Ovary (tissue), 10 donors: ENCODE measurements at regions of chr10 and their contacts with region 1.

Region 1: DNA sequence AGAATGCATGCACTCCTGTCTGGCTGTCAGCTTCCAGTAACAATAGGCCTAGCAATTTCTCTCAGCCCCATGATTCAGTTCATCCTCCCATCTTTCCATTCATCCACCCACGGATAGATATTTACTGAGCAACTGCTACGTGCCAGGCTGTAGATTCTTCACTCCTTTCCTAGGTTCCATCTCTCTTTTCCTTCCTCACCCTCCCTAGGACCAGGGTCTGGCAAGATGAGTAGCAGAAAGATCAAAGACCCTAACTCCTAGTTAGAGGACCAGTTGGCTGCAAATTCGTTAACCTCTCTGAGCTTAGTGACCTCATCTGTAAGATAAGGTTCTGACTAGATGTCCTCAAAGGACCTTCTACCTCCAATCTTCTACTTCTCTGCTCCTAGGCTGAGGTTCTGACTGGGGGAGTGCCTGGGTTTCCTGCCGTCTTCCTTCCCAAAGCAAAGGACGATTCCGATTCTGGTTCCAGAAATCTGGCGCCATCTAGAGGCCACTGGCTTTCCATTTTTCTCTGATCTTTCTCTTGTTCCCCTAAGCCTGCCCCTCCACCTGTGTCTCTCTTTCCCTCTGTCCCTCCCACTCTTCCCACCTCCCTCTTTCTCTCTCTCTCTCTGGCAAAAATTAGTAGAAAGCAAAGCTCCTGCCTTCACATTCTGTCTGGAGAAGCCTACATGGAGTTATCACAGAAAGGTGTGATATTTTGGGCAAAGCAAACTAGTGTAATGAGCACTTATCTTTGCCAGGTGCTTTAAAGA is 26.2 kb downstream of the TBATA start:
- DNase-seq: peak; percentile 65 to 78 (median 74)
- H3K4me3 ChIP-seq: no peak overlapping the region
- H3K27ac ChIP-seq: no peak overlapping the region
- H3K4me1 ChIP-seq: no peaks in the 10 kb centered on the region
- H3K27me3 ChIP-seq: no peaks in the 10 kb centered on the region
- CTCF ChIP-seq: peak in 2 of 3 donors; percentile 23 to 60
- EP300 ChIP-seq: no peak
- POLR2A ChIP-seq: no peak

Region 2: DNA sequence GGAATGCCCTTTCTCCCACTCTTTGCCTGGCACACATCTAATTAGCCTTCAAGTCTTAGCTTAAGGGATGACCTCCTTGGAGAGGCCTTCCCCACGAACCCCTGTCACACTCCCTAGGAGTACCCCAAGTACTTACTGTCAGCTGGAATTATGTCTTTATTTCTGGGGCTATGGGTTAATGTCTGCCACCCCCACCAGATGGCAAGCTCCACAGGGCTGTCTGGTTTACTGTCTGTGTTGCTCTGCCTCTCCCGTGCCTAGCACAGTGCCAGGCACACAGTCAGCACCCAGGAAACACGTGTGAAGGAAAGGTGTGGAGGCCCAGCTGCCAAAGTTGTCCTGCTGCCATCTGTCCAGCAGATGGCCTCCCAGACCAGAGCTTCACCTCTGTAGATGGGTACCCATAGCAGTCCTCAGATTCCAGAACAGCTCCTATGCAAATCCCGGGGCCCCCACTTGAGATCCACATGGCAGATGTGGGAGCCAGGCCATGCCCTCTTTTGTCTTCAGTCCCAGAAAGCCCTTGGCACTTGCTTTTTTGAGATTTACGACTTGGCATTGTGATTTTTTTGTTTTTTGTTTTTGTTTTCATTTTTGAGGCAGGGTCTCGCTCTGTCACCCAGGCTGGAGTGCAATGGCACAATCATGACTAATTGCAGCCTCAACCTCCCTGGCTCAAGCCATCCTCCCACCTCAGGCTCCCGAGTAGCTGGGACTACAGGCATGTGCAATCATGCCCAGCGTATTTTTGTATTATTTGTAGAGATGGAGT is 297.5 kb before region 1 on chr10:
- intact Hi-C with region 1: loop called (anchors 5 to 10 kb)
- DNase-seq: peak; percentile 48 to 73 (median 70)
- H3K4me3 ChIP-seq: no peak overlapping the region
- H3K27ac ChIP-seq: no peak overlapping the region
- H3K4me1 ChIP-seq: peaks cover 7% of the 10 kb centered on the region
- H3K27me3 ChIP-seq: no peaks in the 10 kb centered on the region
- CTCF ChIP-seq: peak; percentile 71 to 78 (median 72)
- EP300 ChIP-seq: no peak
- POLR2A ChIP-seq: no peak

Region 3: DNA sequence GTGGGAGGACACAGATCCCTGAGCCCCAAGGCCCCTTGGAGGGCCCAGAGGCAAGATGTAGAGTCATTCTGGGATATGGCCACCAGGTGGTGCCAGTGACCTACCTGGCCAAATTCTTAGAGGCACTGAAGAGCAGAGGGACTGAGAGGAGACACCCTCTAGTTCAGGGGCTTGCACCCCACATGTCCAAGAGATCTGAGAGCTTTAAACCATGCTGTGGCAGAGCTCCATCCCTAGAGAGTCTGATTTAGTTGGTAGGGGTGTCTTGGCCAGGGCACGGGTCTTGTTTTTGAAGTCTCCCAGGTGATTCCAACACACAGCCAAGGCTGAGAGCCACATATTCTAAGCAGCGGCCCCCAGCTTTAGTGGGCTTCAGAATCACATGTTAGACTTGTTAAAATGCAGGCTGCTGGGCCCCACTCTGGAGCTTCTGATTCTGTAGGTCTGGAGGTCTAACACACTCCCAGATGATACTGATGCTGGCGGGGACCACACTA is 208.9 kb before region 1 on chr10:
- intact Hi-C with region 1: loop called (anchors 2 to 5 kb)
- DNase-seq: peak; percentile 49 to 78 (median 73)
- H3K4me3 ChIP-seq: no peak overlapping the region
- H3K27ac ChIP-seq: no peak overlapping the region
- H3K4me1 ChIP-seq: peaks cover 3% of the 10 kb centered on the region
- H3K27me3 ChIP-seq: no peaks in the 10 kb centered on the region
- CTCF ChIP-seq: peak; percentile 56 to 77 (median 63)
- EP300 ChIP-seq: no peak
- POLR2A ChIP-seq: no peak

Region 4: GRCh38 chr10:70558871-70559810 is 199.8 kb before region 1 on chr10:
- intact Hi-C with region 1: loop called in 2 of 4 experiments (anchors 5 kb)
- DNase-seq: peak; percentile 37 to 71 (median 56)
- H3K4me3 ChIP-seq: no peak overlapping the region
- H3K27ac ChIP-seq: no peak overlapping the region
- H3K4me1 ChIP-seq: peaks cover 5% of the 10 kb centered on the region
- H3K27me3 ChIP-seq: no peaks in the 10 kb centered on the region
- CTCF ChIP-seq: no peak
- EP300 ChIP-seq: no peak
- POLR2A ChIP-seq: no peak